Body of pancreas (tissue), 4 donors: ENCODE measurements at regions of chr22 and their contacts with region 1.

Region 1: DNA sequence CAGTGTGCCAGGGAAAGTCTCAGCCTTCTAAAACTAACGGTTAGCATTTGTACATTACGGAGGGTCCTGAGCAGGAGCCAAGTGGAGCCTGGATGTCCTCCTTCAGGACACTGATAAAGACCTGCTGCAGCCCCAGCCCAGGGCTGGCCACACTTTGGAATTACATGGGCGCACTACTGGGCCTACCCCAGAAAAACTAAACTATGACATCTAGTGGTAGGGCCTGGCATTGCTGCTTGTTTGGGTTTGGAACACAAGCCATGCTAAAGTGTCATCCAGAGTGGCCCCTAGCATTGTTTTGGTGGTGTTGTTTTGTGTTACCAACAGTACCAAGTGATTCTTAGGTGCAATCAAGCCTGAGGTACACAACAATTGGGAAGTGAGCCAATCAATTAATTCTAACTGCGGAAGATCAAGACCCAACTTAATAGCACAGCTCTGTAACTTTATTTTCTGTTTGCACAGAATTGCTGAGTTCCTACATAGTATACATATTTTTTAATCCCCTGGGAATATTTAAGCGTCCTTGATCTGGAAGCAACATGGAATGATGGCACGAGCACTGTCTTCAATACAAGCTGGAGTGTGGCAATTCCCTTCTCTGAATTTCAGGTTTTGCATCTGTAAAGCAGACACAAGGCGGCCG is 340.7 kb downstream of the LARGE1 start:
- DNase-seq: peak; percentile 75 to 77 (median 76)
- ATAC-seq: peak; percentile 89
- H3K4me3 ChIP-seq: no peak overlapping the region
- H3K27ac ChIP-seq: peak overlapping the region in 1 of 4 donors; percentile 49
- H3K4me1 ChIP-seq: peaks cover 24% of the 10 kb centered on the region
- H3K27me3 ChIP-seq: no peaks in the 10 kb centered on the region
- CTCF ChIP-seq: peak; percentile 74 to 94 (median 89)
- POLR2A ChIP-seq: no peak

Region 2: DNA sequence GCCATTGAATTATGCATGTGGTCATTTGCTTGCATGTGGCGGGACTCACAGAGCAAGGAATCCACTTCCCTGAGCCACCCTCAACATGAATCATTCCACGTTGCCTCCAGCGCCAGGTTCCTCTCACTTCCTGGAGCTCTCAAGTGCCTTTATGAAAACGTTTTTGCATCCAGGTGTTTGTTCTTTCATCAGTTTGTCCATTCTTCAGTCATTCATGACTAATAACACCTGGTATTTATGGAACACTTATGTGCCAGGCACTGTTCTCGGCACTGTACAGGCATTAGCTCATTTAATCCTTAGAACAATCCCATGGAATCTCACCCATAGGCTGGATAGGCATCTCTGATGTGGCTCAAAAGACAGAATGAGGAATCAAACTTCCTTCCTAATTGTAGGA is 265.3 kb before region 1 on chr22:
- intact Hi-C with region 1: loop called (anchors 5 kb)
- DNase-seq: no peak
- ATAC-seq: no peak
- H3K4me3 ChIP-seq: no peak overlapping the region
- H3K27ac ChIP-seq: no peak overlapping the region
- H3K4me1 ChIP-seq: no peaks in the 10 kb centered on the region
- H3K27me3 ChIP-seq: no peaks in the 10 kb centered on the region
- CTCF ChIP-seq: no peak
- POLR2A ChIP-seq: no peak

Region 3: GRCh38 chr22:33519071-33519973 is 60.2 kb before region 1 on chr22:
- intact Hi-C with region 1: loop called (anchors 5 kb)
- DNase-seq: peak; percentile 32 to 63 (median 38)
- ATAC-seq: peak; percentile 54
- H3K4me3 ChIP-seq: no peak overlapping the region
- H3K27ac ChIP-seq: peak overlapping the region in 1 of 4 donors; percentile 26
- H3K4me1 ChIP-seq: peaks cover 21% of the 10 kb centered on the region
- H3K27me3 ChIP-seq: no peaks in the 10 kb centered on the region
- CTCF ChIP-seq: peak; percentile 45 to 74 (median 65)
- POLR2A ChIP-seq: no peak

Region 4: DNA sequence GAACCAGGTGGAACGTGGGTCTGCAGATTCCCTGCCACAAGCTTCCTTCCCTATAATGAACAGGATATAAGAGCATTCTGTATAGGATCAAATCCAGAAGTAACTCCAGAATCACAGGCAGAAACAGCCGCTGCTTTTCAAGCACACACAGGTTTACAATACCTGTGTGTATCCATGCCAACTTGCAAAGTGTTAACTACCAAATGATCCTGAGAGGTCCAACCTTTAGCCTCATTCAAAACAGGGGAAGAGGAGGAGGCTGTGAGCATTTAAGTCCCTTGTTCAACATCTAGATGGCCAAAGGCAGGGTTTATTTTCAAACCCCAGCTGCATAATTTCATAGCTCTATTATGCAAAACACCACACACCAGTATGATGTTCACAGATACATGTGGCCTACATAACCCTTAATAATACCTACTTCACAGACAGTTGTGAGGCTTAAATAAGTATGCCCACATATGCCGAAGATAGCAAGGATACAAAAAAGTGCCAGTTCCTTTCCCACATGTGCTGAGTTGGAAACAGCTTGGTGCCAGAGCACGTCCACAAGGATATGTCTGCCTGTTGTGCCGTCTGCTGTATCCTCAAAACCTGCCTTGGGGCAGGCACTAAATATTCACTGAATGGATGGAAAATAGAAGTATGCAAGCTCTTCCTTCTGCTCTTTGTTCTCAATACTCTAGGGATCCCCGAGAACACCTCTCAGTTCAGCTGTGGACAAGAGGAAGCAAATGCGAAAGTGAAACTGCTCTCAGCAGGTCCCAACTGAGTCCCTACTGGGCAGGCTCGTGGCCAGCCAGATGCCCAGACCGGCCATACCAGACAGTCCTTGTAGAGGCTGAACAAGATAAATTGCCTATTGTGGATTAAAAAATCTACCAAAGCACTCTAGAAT is 273.9 kb after region 1 on chr22:
- intact Hi-C with region 1: no loop called
- DNase-seq: peak; percentile 69 to 85 (median 80)
- ATAC-seq: peak; percentile 88
- H3K4me3 ChIP-seq: peak overlapping the region; percentile 9 to 27
- H3K27ac ChIP-seq: peak overlapping the region; percentile 52 to 80 (median 60)
- H3K4me1 ChIP-seq: peaks cover 7% of the 10 kb centered on the region
- H3K27me3 ChIP-seq: no peaks in the 10 kb centered on the region
- CTCF ChIP-seq: no peak
- POLR2A ChIP-seq: no peak